Left cardiac atrium (tissue), 4 donors: ENCODE measurements at regions of chrX and their contacts with region 1.

Region 1: GRCh38 chrX:38654302-38654701 is 93.0 kb downstream of the TSPAN7 start:
- DNase-seq: no peak
- ATAC-seq: peak; percentile 62 to 70

Region 2: GRCh38 chrX:38458071-38458470 is 196.2 kb before region 1 on chrX:
- intact Hi-C with region 1: loop called in 1 of 2 experiments (anchors 10 kb)
- DNase-seq: no peak
- ATAC-seq: no peak

Region 3: DNA sequence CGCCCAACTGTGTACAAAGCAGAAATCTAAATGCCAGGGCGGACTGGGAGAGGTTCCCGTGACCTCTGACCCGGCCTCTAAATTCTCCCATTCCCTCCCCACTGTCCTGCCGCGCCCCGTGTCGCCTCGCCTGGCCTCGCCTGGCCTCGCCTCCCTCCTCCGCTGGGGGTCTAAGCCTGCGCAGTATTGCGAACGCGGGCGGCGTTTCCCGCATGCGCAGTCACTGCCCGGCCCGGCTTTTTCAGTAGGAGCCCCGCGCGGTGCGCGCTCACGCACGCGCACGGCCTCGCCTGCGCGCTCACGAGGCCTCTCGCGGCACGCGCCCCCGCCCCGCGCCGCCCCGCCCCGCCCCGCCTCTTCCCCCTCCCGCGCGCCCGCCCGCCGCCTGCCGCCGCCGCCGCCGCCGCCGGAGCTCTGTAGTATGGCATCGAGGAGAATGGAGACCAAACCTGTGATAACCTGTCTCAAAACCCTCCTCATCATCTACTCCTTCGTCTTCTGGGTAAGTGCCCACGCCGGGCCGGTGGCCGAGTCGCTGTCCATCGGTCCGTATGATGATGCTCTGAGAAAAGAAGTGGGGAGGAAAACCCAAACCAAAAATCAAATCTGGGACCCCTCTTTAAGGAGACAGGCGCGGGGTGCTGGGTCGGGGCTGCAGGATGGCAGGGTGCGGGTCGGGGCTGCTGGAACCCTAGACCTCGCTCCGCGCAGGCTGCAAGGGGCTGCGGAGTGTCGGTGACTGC is 93.0 kb before region 1 on chrX and contains the start of gene TSPAN7:
- intact Hi-C with region 1: loop called in 1 of 2 experiments (anchors 5 kb)
- DNase-seq: peak; percentile 86
- ATAC-seq: peak; percentile 92 to 94
- total RNA-seq, gene TSPAN7: 73.0 to 96.3 TPM

Region 4: GRCh38 chrX:38902972-38903492 is 248.7 kb after region 1 on chrX:
- intact Hi-C with region 1: no loop called
- DNase-seq: no peak
- ATAC-seq: no peak

Region 5: DNA sequence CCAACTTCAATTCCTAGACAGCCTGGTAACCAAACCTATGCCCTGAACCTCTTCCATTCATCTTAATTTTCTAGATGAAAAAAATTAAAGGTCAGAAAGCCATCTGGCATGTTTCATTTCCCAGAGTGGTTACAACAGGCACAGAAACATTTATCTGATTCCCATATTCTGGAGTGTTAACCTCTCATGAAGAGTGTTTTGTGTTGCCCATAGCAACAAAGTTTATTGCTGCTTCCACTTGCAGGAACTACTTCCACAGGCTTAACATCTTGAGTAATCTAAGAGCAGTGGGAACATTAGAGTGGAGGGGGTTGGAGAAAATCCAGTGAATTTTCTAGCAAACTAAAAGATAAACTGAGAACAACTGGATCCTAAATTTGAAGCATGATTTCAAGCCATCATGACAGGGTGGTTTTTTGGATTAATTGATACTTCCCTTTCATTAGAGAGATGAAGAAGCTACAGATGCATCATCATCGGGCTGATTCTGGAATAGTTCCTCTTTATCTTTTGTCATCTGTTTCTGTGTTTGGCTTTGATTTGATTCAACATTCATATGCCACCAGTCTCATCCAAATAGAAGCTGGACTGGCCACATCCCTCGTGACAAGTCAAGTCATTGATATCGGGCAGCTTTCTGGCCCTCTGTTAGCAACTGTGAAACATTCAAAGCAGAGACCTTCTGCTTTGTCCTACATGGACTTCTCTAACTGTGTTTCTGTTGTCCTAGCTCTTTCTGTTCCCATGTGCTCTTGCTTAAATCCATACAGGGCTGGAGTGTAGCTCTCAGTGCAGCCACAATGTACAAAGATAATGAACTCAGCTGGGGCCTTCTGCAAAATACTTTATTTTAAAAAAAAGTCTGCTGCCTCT is 314.3 kb after region 1 on chrX:
- intact Hi-C with region 1: no loop called
- DNase-seq: no peak
- ATAC-seq: peak in 1 of 2 donors; percentile 42